T-cell (primary cell): ENCODE measurements at regions of chr15 and their contacts with region 1.

Region 1: DNA sequence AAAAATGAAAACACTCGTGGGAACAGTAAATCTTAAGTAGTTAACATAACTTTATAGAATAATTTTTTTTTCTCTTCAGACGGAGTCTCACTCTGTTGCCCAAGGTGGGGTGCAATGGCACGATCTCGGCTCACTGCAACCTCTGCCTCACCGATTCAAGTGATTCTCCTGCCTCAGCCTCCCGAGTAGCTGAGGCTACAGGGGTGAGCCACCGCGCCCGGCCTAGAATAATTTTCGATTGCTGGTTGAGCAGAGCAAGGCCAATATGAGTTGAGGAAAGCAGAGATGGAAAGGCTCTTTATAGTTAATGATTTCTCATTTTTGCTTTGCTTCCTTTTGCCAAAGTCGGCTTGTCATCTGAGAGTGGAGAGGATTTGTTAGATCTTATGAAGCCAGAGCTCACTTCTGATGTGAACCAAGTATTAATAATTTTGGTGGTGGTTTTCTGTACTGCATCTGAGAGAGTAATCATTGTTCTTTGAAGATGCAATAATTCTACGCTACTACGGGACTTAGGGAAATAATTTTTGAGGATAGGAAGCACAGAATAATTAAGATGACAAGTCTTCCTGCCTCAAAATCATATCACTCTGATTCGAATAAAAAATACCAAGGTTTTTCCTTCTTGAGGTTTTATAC is 1.6 kb upstream of the GOLM2 start:
- DNase-seq: peak in 3 of 35 experiments; percentile 2 to 26 (median 5)
- ATAC-seq: no peak
- H3K4me3 ChIP-seq: peak overlapping the region in 1 of 2 donors; percentile 88
- H3K4me3 Mint-ChIP-seq: peak overlapping the region; percentile 95 to 99 (median 96)
- H3K27ac ChIP-seq: peak overlapping the region; percentile 94
- H3K27ac Mint-ChIP-seq: peak overlapping the region; percentile 98
- H3K4me1 ChIP-seq: peaks cover 14 to 22% of the 10 kb centered on the region in 2 experiments
- H3K4me1 Mint-ChIP-seq: peaks cover 42 to 47% (median 45%) of the 10 kb centered on the region in 3 donors
- H3K27me3 ChIP-seq: no peaks in the 10 kb centered on the region
- H3K27me3 Mint-ChIP-seq: peaks cover 4 to 8% of the 10 kb centered on the region in 2 donors

Region 2: DNA sequence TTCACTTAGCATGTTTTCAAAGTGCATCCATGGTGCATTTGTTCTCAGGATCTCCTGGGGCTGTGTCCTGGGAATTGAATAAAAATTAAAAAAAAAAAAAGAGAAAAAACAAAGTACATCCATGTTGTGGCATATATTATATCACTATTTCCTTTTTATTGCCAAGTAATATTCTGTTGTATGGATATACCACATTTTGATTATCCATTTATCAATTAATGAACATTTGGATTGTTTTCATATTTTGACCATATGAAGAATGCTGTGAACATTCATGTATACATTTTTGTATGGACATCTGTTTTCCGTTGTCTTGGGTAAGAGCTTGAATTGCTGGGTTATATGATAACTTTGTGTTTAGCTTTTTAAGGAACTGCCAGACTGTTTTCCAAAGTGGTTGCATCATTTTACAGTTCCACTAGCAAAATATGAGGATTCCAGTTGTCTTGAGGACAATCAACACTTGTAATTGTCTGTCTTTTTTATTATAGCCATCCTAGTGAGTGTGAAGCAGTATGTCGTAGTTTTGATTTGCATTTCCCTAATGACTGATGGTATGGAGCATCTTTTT is 185.0 kb after region 1 on chr15:
- CTCF ChIA-PET with region 1: interaction called in 1 of 2 experiments, 12 read pairs
- POLR2A ChIA-PET with region 1: no interaction called
- DNase-seq: no peak
- ATAC-seq: no peak
- H3K4me3 ChIP-seq: no peak overlapping the region
- H3K4me3 Mint-ChIP-seq: no peak overlapping the region
- H3K27ac ChIP-seq: no peak overlapping the region
- H3K27ac Mint-ChIP-seq: no peak overlapping the region
- H3K4me1 ChIP-seq: no peaks in the 10 kb centered on the region
- H3K4me1 Mint-ChIP-seq: peaks cover 23 to 28% (median 26%) of the 10 kb centered on the region in 3 donors
- H3K27me3 ChIP-seq: no peaks in the 10 kb centered on the region
- H3K27me3 Mint-ChIP-seq: no peaks in the 10 kb centered on the region